Right cardiac atrium (tissue), 5 donors: ENCODE measurements at regions of chr6 and their contacts with region 1.

Region 1: DNA sequence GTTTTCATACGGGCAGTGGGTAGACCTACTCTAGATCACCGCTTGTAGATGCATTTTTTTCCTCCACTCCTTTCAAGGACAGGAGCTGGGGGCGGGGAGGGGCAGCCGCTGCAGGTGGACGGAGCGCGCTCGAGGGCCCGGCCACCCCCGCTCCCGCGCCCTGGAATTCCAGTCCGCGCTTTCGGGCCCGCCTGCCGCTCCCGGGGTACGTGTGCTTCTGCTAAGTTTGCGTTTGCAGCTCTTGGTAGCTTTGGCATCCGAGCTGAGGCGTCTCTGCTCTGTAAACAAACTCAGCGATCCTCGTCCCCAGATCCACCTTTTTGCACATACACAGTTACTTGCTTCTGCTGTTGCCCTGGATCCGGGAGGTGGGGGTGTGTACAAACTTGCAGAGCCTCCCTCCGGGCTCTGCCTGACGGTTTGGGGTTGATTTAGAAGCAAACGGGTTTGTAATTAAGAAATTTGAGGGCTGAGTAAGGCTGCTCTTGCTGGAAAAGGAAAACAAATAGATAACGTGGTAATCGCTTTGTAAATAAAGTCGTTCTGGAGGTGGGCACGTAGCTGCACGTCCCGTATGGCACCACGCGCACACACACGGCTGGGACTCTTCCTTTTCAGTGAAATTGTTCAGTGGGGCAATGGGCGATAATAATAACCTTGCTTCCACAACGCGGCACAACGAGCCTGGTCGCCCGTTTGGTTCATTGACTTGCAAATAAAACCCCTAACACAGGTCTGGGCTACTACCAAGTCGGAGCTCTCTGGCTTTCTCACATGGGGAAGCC is 976 bp upstream of the CITED2 start:
- DNase-seq: peak; percentile 88 to 95 (median 95)
- ATAC-seq: peak; percentile 87 to 88
- H3K4me3 ChIP-seq: peak overlapping the region; percentile 85
- H3K27ac ChIP-seq: peak overlapping the region; percentile 98
- H3K4me1 ChIP-seq: no peaks in the 10 kb centered on the region
- H3K27me3 ChIP-seq: no peaks in the 10 kb centered on the region

Region 2: DNA sequence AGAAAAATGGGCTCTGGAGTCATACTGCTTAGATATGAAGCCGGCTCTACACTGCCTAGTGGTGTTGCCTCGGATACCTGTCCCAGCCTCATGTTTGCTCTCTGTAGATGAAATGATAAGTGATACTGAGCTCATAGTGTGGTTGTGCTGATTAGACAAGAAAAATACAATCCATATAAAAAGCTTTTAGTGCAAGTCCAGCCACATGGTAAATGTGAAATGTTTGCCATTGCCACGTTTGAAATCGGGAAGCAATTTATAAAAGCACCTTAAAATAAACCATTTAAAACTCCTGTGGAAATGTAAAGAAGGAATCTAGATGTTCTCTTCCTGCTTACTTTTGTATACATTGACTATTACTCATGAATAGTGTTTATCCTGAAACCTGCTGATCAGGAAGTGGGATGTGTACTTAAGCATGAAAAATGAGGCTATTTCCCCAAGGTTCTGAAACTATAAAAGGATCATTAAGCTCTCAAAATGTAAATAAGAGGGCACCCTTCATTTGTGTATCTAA is 1144.0 kb before region 1 on chr6:
- intact Hi-C with region 1: no loop called
- DNase-seq: no peak
- ATAC-seq: no peak
- H3K4me3 ChIP-seq: no peak overlapping the region
- H3K27ac ChIP-seq: no peak overlapping the region
- H3K4me1 ChIP-seq: no peaks in the 10 kb centered on the region
- H3K27me3 ChIP-seq: no peaks in the 10 kb centered on the region

Region 3: DNA sequence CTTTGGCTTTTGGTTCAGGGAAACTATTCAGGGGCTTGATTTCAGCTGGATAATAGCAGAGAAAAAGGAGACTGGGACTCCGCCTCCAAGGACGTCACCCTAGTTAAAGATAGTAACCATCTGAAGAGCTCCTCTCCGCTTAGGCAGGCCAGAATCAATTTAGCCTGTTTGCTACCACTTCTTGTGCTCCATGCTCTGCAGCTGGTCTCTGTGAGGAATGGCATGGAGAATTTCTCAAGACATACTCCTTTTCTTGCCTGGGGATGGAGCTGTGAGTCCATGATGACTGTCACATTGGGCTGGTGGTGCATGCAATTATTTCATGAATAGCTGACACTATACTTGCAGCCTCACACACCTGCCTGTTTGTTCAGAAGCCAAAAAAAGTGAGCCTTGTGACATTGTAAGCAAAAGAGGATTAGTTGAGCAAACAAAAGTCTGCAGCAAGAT is 145.0 kb before region 1 on chr6:
- intact Hi-C with region 1: no loop called
- DNase-seq: no peak
- ATAC-seq: peak in 1 of 2 donors; percentile 43
- H3K4me3 ChIP-seq: no peak overlapping the region
- H3K27ac ChIP-seq: no peak overlapping the region
- H3K4me1 ChIP-seq: no peaks in the 10 kb centered on the region
- H3K27me3 ChIP-seq: no peaks in the 10 kb centered on the region

Region 4: GRCh38 chr6:139323511-139324300 is 51.7 kb before region 1 on chr6:
- intact Hi-C with region 1: no loop called
- DNase-seq: peak; percentile 55 to 82 (median 71)
- ATAC-seq: peak; percentile 61 to 90
- H3K4me3 ChIP-seq: no peak overlapping the region
- H3K27ac ChIP-seq: peak overlapping the region; percentile 62
- H3K4me1 ChIP-seq: no peaks in the 10 kb centered on the region
- H3K27me3 ChIP-seq: no peaks in the 10 kb centered on the region

Region 5: GRCh38 chr6:139515511-139515910 is 140.1 kb after region 1 on chr6:
- intact Hi-C with region 1: loop called in 2 of 4 experiments (anchors 10 kb)
- DNase-seq: no peak
- ATAC-seq: no peak
- H3K4me3 ChIP-seq: no peak overlapping the region
- H3K27ac ChIP-seq: no peak overlapping the region
- H3K4me1 ChIP-seq: no peaks in the 10 kb centered on the region
- H3K27me3 ChIP-seq: no peaks in the 10 kb centered on the region

Region 6: DNA sequence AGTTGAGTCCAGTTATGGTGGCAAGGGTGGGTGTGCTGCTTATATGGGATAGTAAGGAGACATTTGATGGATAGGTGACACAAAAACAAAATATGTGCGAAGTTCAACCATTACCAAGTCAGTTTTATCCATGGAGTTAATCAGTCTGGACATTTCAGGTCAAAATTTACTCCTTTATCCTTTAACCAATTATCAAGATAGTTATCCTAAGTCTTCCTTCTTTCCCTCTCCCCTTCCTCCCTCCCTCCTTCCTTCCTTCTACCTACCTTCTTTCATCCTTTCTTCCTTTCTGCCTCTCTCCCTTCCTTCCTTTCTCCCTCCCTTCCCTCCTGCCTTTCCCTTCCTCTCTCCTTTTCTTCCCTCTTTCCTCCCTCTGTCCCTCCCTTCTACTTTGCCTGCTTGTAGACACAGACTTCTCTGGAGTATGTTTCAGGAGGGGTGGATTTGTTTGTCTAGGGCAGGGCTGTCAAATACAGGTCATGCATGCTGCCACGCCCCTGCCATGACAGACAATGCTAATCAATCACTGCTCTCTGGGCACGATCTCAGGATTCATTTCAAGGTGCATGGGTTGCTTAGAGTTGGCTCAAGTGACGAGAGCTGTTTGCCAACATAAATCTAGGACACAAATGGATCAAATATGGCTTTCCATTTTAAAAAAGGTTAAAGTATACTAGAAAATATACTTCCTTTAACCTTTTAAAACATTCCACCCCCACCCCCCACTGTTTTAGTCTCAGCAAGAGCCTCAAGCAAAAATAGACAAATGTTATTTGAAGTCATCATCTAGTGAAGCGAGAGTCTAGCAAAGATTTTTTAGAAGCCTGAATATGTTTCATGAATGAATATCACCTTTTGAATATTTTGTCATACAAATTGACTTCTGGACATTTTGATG is 280.6 kb after region 1 on chr6:
- intact Hi-C with region 1: no loop called
- DNase-seq: no peak
- ATAC-seq: peak in 1 of 2 donors; percentile 45
- H3K4me3 ChIP-seq: no peak overlapping the region
- H3K27ac ChIP-seq: no peak overlapping the region
- H3K4me1 ChIP-seq: no peaks in the 10 kb centered on the region
- H3K27me3 ChIP-seq: no peaks in the 10 kb centered on the region

Region 7: DNA sequence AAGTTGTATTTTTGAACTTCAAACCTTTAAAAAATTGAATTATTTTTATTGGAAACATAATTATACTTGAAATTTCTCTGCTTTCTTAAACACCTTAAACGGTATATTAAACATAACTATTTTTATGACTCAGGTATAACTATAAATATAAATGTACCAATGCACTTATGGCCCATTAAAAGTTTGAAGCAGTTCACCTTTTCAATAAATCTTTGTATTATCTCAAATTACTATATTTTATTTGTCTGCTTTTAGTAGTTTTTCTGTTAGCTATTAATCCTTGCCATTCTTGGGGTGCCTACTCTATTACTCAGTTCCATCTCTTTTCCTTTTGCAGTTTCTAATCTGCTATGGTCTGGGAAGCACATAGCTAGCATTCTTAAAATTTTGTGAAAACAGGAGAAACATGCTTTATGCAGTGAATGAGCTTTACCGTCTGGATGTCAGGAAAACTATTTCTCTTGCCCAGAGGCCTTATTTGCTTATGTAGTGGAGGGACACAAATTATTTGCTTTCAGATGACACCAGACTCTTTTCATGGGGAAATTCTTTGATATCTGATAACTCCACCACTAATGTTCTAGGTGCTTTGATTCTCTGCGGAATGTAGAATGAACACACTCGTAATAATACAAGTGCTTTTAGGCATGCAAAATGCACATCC is 377.9 kb after region 1 on chr6:
- intact Hi-C with region 1: loop called in 2 of 4 experiments (anchors 10 kb)
- DNase-seq: no peak
- ATAC-seq: no peak
- H3K4me3 ChIP-seq: no peak overlapping the region
- H3K27ac ChIP-seq: no peak overlapping the region
- H3K4me1 ChIP-seq: peaks cover 5% of the 10 kb centered on the region
- H3K27me3 ChIP-seq: no peaks in the 10 kb centered on the region

Region 8: GRCh38 chr6:139764498-139764986 is 389.1 kb after region 1 on chr6:
- intact Hi-C with region 1: loop called in 3 of 4 experiments (anchors 5 to 10 kb)
- DNase-seq: no peak
- ATAC-seq: peak; percentile 94 to 99
- H3K4me3 ChIP-seq: no peak overlapping the region
- H3K27ac ChIP-seq: peak overlapping the region; percentile 96
- H3K4me1 ChIP-seq: peaks cover 3% of the 10 kb centered on the region
- H3K27me3 ChIP-seq: no peaks in the 10 kb centered on the region

Region 9: GRCh38 chr6:139881728-139882211 is 506.3 kb after region 1 on chr6:
- intact Hi-C with region 1: loop called in 1 of 4 experiments (anchors 5 kb)
- DNase-seq: no peak
- ATAC-seq: peak; percentile 64 to 68
- H3K4me3 ChIP-seq: no peak overlapping the region
- H3K27ac ChIP-seq: no peak overlapping the region
- H3K4me1 ChIP-seq: peaks cover 2% of the 10 kb centered on the region
- H3K27me3 ChIP-seq: no peaks in the 10 kb centered on the region

Region 10: DNA sequence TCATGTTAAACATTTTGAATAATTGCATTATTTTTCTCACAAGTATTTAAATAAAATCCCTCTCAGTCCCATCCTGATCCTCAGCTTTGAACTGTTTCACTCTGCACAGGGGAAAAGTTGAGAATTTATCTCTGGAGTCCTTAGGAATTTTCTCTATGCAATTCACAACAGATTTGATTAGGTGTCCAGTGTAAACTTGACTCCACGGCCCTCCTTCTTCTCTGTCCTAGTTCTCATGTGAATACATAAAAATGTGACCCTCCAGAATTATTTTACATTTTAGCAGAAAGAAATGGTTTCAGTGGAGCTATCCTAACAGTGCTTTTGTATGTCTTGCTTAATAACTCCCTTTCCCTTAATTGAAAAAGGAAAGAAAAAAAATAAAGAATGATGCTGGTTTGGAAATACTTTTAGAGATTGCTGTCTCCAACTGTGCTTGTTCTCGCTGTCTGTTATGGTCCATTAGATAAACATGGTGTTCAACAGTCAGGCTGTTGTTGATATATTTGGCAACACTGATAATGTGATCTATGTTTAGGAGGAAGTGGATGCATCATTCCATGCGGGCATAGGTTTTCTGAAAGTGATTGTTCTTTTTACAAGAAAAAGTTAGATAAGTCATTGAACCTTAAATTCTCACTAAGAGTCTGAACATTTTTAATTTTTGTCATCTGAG is 598.4 kb after region 1 on chr6:
- intact Hi-C with region 1: loop called in 2 of 4 experiments (anchors 5 to 10 kb)
- DNase-seq: peak in 1 of 3 donors; percentile 9
- ATAC-seq: peak; percentile 93
- H3K4me3 ChIP-seq: peak overlapping the region; percentile 28
- H3K27ac ChIP-seq: no peak overlapping the region
- H3K4me1 ChIP-seq: peaks cover 3% of the 10 kb centered on the region
- H3K27me3 ChIP-seq: no peaks in the 10 kb centered on the region

Region 11: DNA sequence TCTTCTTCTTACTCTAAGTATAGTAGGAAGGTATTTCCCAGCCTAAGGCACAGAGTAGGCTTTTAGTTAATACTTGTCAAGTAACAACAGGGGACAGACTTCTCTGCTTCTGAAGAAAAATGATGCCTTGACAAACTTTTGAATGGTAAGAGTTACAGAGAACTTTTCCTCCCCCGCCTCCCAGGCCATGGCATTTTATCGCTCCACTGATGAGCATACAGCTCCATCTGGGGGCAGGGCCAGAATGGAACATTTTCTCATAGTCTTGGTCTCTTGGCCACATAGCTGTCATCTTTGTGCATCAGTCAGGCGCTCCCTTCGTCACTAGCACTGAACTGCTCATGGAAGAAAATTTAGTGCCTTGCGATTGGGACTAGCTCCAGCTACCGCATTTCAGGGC is 1065.8 kb after region 1 on chr6:
- intact Hi-C with region 1: loop called in 3 of 4 experiments (anchors 5 to 10 kb)
- DNase-seq: peak; percentile 52 to 71 (median 67)
- ATAC-seq: peak; percentile 91 to 92
- H3K4me3 ChIP-seq: no peak overlapping the region
- H3K27ac ChIP-seq: peak overlapping the region; percentile 34
- H3K4me1 ChIP-seq: no peaks in the 10 kb centered on the region
- H3K27me3 ChIP-seq: no peaks in the 10 kb centered on the region